GM12878 (cell line): ENCODE measurements at regions of chr15 and their contacts with region 1.

Region 1: DNA sequence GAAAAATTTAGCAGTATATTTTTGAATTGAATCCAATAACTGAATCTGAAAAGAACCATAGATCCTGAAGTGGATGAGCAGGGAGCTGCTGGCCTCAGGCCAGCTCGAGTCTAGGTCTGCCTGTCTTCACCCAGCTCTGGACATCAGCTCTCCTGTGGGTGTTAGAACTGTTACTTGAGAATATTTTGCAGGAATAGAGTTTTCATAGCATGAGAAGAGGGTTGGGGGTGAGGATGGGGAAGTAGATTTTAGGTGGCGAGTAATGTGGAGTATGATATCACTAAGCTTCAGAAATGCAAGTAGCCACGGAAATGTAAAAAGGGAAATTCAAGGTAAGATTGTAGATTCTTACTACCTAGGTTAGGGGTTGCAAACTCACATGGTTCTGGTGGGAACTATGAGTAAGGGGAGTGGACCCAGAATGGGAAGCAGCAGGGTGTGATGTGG is 6.2 kb downstream of the RAB8B start:
- DNase-seq: no peak
- ATAC-seq: peak; percentile 2; the same call in 1 of the 3 replicates
- H3K4me3 ChIP-seq: peak overlapping the region; percentile 96; the same call in 1 of the 2 replicates
- H3K27ac ChIP-seq: peak overlapping the region; percentile 51
- H3K4me1 ChIP-seq: peaks cover 40% of the 10 kb centered on the region
- H3K27me3 ChIP-seq: no peaks in the 10 kb centered on the region
- CTCF ChIP-seq: no peak
- EP300 ChIP-seq: no peak
- POLR2A ChIP-seq: no peak
- RAD21 ChIP-seq: no peak

Region 2: DNA sequence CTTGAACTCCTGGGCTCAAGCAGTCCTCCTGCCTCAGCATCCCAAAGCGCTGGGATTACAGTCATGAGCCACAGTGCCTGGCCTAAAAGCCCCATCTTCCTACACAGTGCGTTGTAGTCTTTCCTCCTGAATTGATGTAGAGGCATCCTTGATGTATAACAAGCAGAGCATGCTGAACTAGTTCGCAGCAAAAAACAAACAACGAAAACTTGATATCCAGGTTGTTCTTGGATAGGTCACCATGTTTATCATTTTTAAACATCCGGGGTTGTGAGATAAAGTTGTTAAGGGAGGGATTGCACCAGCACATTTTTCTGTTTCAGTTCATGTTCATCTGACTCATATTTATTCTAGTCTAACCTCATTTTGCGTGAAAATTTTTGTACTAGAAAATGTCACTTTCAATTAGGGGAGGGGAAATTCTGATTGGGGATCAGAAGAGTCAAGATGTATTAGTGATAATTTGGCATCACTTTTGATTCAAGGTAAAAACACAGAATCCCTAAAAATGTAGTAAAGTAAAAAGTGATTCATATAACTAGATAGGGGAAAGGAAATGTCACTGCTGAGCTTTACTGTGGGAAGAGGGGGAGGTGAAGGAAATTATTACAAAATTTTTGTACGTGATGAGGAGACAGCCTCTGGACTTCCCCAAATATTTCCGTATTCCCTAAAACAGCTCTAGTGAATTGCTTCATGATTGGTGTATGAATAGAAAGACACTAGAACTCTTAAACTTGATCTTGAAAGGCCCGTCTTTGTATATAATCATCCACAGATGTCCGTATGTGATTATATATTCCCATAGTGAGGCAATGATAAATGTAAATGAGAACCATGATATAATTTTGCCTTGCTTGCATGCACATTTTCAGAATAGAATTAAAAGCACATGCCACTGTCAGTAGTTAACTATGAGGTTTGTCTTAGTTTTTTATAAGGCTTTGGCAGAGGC is 16.7 kb after region 1 on chr15:
- CTCF ChIA-PET with region 1: interaction called, 90 read pairs
- POLR2A ChIA-PET with region 1: interaction called, 118 read pairs
- RAD21 ChIA-PET with region 1: interaction called, 28 read pairs
- SMC1A ChIA-PET with region 1: interaction called, 252 read pairs
- in situ Hi-C with region 1: no loop called
- intact Hi-C with region 1: loop called (anchors 2 kb)
- DNase-seq: peak; percentile 59
- ATAC-seq: peak; percentile 70
- H3K4me3 ChIP-seq: peak overlapping the region; percentile 62
- H3K27ac ChIP-seq: peak overlapping the region; percentile 87
- H3K4me1 ChIP-seq: peaks cover 46% of the 10 kb centered on the region
- H3K27me3 ChIP-seq: no peaks in the 10 kb centered on the region
- CTCF ChIP-seq: no peak
- EP300 ChIP-seq: peak; percentile 75 to 87
- POLR2A ChIP-seq: no peak
- RAD21 ChIP-seq: no peak

Region 3: GRCh38 chr15:63277038-63277892 is 81.7 kb after region 1 on chr15 and contains the start of gene APH1B:
- CTCF ChIA-PET with region 1: interaction called, 5 read pairs
- POLR2A ChIA-PET with region 1: interaction called, 4 read pairs
- RAD21 ChIA-PET with region 1: interaction called, 6 read pairs
- SMC1A ChIA-PET with region 1: interaction called, 15 read pairs
- in situ Hi-C with region 1: no loop called
- intact Hi-C with region 1: loop called (anchors 2 kb)
- DNase-seq: no peak
- ATAC-seq: peak; percentile 94
- H3K4me3 ChIP-seq: peak within 1 kb of the TSS; percentile 94
- H3K27ac ChIP-seq: peak within 1 kb of the TSS; percentile 62
- H3K4me1 ChIP-seq: peaks cover 4% of the 10 kb centered on the region; the same call in 1 of the 2 replicates
- H3K27me3 ChIP-seq: no peaks in the 10 kb centered on the region
- CTCF ChIP-seq: no peak
- EP300 ChIP-seq: no peak
- POLR2A ChIP-seq: peak; percentile 89
- RAD21 ChIP-seq: no peak
- polyA plus RNA-seq, gene APH1B: 12.9 to 17.6 TPM

Region 4: DNA sequence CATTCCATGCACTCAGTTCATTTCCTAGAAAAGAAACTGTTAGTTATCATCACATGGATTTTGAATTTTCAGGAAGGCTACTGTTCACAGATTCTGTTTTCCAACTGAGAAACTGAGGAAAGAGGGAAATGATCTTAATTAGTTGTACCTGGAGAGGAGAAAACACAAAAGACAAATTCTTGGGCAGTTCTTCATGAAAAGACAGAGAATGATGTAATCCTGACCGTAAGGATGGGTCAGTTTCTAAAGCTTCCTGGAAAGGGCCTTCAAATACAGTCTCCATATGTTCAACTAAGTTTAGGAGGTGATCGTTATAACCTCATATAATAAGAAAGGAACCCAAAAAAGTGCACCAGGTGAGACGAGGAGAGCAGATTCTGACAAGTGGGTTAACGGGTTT is 141.5 kb after region 1 on chr15:
- CTCF ChIA-PET with region 1: no interaction called
- POLR2A ChIA-PET with region 1: no interaction called
- RAD21 ChIA-PET with region 1: no interaction called
- SMC1A ChIA-PET with region 1: no interaction called
- in situ Hi-C with region 1: no loop called
- intact Hi-C with region 1: no loop called
- DNase-seq: no peak
- ATAC-seq: no peak
- H3K4me3 ChIP-seq: no peak overlapping the region
- H3K27ac ChIP-seq: no peak overlapping the region
- H3K4me1 ChIP-seq: no peaks in the 10 kb centered on the region
- H3K27me3 ChIP-seq: peaks cover 0 to 1% of the 10 kb centered on the region in 2 experiments; a peak in 1 of 4 replicates
- CTCF ChIP-seq: no peak
- EP300 ChIP-seq: no peak
- POLR2A ChIP-seq: no peak
- RAD21 ChIP-seq: no peak

Region 5: GRCh38 chr15:63833021-63833696 is 637.6 kb after region 1 on chr15:
- CTCF ChIA-PET with region 1: no interaction called
- POLR2A ChIA-PET with region 1: no interaction called
- RAD21 ChIA-PET with region 1: no interaction called
- SMC1A ChIA-PET with region 1: no interaction called
- in situ Hi-C with region 1: no loop called
- intact Hi-C with region 1: no loop called
- DNase-seq: no peak
- ATAC-seq: peak; percentile 68
- H3K4me3 ChIP-seq: peak overlapping the region; percentile 99
- H3K27ac ChIP-seq: peak overlapping the region; percentile 99
- H3K4me1 ChIP-seq: peaks cover 10% of the 10 kb centered on the region
- H3K27me3 ChIP-seq: no peaks in the 10 kb centered on the region
- CTCF ChIP-seq: no peak
- EP300 ChIP-seq: no peak
- POLR2A ChIP-seq: no peak
- RAD21 ChIP-seq: no peak